H1 (cell line): ENCODE measurements at regions of chr17 and their contacts with region 1.

Region 1: DNA sequence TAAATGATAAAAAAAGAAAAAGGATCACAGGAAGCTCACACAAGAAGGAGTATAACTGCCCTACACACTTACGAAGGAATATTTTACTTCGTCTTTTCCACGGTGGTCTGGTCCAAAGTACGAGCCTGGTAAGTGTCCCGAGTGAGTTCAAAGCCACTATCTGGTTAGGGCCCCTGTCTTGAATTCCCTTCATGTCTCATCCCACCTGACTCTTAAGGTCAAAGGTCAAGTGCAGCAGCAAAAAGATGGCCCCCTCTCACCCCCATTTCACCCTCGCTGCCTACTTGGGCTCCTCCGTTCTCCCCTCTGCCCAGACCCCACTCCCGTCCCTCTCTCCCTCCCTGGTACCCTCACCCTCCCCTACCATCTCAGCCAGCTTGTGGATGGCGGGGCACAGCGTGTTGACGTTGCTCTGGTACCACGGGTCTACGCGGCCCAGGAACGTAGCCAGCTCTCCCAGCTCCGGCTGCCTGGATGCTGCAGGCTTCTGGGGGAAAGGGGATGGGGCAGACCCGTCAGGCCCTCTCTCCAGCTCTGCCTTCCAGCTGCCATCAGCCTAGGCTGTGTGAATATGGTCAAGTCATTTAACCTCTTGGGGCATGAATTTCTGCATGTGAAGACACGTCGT is 27.8 kb upstream of the MFSD6L start:
- DNase-seq: peak in 1 of 2 experiments; percentile 38
- H3K4me3 ChIP-seq: no peak overlapping the region
- H3K27ac ChIP-seq: no peak overlapping the region
- H3K4me1 ChIP-seq: peaks cover 0 to 7% (median 0%) of the 10 kb centered on the region in 4 experiments; a peak in 4 of 7 replicates
- H3K27me3 ChIP-seq: no peaks in the 10 kb centered on the region
- CTCF ChIP-seq: no peak
- EP300 ChIP-seq: no peak
- POLR2A ChIP-seq: no peak
- RAD21 ChIP-seq: no peak

Region 2: GRCh38 chr17:8745586-8746500 is 81.1 kb before region 1 on chr17:
- CTCF ChIA-PET with region 1: no interaction called
- POLR2A ChIA-PET with region 1: no interaction called
- DNase-seq: peak in 1 of 2 experiments; percentile 93
- H3K4me3 ChIP-seq: peak overlapping the region; percentile 61 to 80 (median 62)
- H3K27ac ChIP-seq: no peak overlapping the region
- H3K4me1 ChIP-seq: peaks cover 0 to 5% (median 0%) of the 10 kb centered on the region in 4 experiments; a peak in 2 of 7 replicates
- H3K27me3 ChIP-seq: peaks cover 0 to 5% (median 0%) of the 10 kb centered on the region in 4 experiments; a peak in 3 of 7 replicates
- CTCF ChIP-seq: peak; percentile 62 to 88 (median 73)
- EP300 ChIP-seq: no peak
- POLR2A ChIP-seq: no peak
- RAD21 ChIP-seq: peak; percentile 89

Region 3: GRCh38 chr17:8843344-8843743 is 16.4 kb after region 1 on chr17:
- CTCF ChIA-PET with region 1: interaction called, 15 read pairs
- POLR2A ChIA-PET with region 1: no interaction called
- DNase-seq: no peak
- H3K4me3 ChIP-seq: no peak overlapping the region
- H3K27ac ChIP-seq: no peak overlapping the region
- H3K4me1 ChIP-seq: peaks cover 0 to 3% (median 0%) of the 10 kb centered on the region in 4 experiments; a peak in 3 of 7 replicates
- H3K27me3 ChIP-seq: no peaks in the 10 kb centered on the region
- CTCF ChIP-seq: no peak
- EP300 ChIP-seq: no peak
- POLR2A ChIP-seq: no peak
- RAD21 ChIP-seq: no peak